OCI-LY7 (cell line): ENCODE measurements at regions of chr6 and their contacts with region 1.

Region 1: GRCh38 chr6:138428944-138429598 is 25.0 kb downstream of the HEBP2 start:
- DNase-seq: peak; percentile 73
- H3K4me3 ChIP-seq: no peak overlapping the region
- H3K27ac ChIP-seq: no peak overlapping the region
- H3K4me1 ChIP-seq: no peaks in the 10 kb centered on the region
- CTCF ChIP-seq: peak; percentile 95

Region 2: DNA sequence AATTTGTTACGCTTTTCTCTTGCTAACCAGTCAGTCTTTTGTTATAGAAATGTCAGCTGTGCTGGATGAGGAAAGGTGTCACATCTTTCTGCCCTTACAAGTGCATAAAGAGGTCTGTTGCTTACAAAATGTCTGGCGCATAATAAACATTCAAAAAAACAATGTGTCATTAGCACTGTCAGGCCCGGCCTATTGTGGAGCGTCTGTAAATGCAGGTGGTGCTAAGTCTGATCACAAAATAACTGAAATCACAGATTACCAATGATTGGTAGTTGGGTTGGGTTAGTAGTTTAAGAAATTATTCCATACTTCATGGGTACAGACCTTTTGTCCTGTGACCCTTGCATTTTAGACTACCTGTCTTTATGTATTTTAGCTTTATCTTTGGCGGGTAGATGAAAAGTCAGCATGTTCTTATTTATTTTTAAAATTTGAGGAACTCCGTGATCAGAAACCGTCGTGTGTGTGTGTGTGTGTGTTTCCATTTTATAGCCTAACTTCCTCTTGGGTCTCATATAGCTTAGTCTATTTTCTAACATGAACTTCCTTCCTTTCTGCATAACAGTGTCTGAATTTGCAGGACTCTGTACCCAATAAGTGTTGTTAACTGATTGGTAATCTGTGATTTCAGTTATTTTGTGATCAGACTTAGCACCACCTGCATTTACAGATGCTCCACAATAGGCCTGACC is 1121.8 kb before region 1 on chr6:
- CTCF ChIA-PET with region 1: no interaction called
- POLR2A ChIA-PET with region 1: no interaction called
- intact Hi-C with region 1: no loop called
- DNase-seq: peak; percentile 10
- H3K4me3 ChIP-seq: no peak overlapping the region
- H3K27ac ChIP-seq: no peak overlapping the region
- H3K4me1 ChIP-seq: peaks cover 8% of the 10 kb centered on the region
- CTCF ChIP-seq: no peak

Region 3: GRCh38 chr6:138107078-138107751 is 321.9 kb before region 1 on chr6 and contains the start of gene PERP:
- CTCF ChIA-PET with region 1: no interaction called
- POLR2A ChIA-PET with region 1: no interaction called
- intact Hi-C with region 1: no loop called
- DNase-seq: no peak
- H3K4me3 ChIP-seq: no peak within 1 kb of the TSS
- H3K27ac ChIP-seq: no peak within 1 kb of the TSS
- H3K4me1 ChIP-seq: no peaks in the 10 kb centered on the region
- CTCF ChIP-seq: no peak
- total RNA-seq, gene PERP: not detected in 2 replicates

Region 4: GRCh38 chr6:138336221-138336620 is 92.8 kb before region 1 on chr6:
- CTCF ChIA-PET with region 1: no interaction called
- POLR2A ChIA-PET with region 1: no interaction called
- intact Hi-C with region 1: no loop called
- DNase-seq: no peak
- H3K4me3 ChIP-seq: no peak overlapping the region
- H3K27ac ChIP-seq: no peak overlapping the region
- H3K4me1 ChIP-seq: no peaks in the 10 kb centered on the region
- CTCF ChIP-seq: no peak

Region 5: DNA sequence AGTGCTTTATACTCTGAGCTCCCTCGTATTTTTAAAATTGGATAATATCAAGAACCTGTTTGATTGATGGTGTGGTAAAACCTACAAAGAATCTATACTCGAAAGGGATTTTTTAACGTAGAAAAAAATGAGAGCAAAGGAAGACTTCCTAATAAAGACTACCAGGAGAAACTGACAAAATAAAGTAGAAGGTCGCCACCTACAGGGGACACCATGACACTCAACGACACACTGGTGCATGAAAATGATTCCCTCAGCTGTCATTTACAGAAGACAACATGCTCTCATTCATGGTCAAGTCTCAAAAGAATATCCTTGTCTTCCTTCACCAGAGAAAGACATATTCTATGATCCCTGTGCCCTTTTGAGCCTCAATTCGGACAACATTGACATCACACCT is 80.3 kb after region 1 on chr6:
- CTCF ChIA-PET with region 1: interaction called, 7 read pairs
- POLR2A ChIA-PET with region 1: interaction called, 3 read pairs
- intact Hi-C with region 1: loop called (anchors 1 kb)
- DNase-seq: peak; percentile 60
- H3K4me3 ChIP-seq: no peak overlapping the region
- H3K27ac ChIP-seq: no peak overlapping the region
- H3K4me1 ChIP-seq: peaks cover 4% of the 10 kb centered on the region
- CTCF ChIP-seq: peak; percentile 84

Region 6: GRCh38 chr6:138517635-138518034 is 88.6 kb after region 1 on chr6:
- CTCF ChIA-PET with region 1: no interaction called
- POLR2A ChIA-PET with region 1: interaction called, 7 read pairs
- intact Hi-C with region 1: loop called (anchors 2 kb)
- DNase-seq: peak; percentile 76
- H3K4me3 ChIP-seq: no peak overlapping the region
- H3K27ac ChIP-seq: no peak overlapping the region
- H3K4me1 ChIP-seq: peaks cover 5% of the 10 kb centered on the region
- CTCF ChIP-seq: peak; percentile 85

Region 7: GRCh38 chr6:138588805-138589434 is 159.8 kb after region 1 on chr6:
- CTCF ChIA-PET with region 1: no interaction called
- POLR2A ChIA-PET with region 1: interaction called, 3 read pairs
- intact Hi-C with region 1: loop called (anchors 2 kb)
- DNase-seq: peak; percentile 68
- H3K4me3 ChIP-seq: no peak overlapping the region
- H3K27ac ChIP-seq: no peak overlapping the region
- H3K4me1 ChIP-seq: peaks cover 16% of the 10 kb centered on the region
- CTCF ChIP-seq: peak; percentile 97

Region 8: DNA sequence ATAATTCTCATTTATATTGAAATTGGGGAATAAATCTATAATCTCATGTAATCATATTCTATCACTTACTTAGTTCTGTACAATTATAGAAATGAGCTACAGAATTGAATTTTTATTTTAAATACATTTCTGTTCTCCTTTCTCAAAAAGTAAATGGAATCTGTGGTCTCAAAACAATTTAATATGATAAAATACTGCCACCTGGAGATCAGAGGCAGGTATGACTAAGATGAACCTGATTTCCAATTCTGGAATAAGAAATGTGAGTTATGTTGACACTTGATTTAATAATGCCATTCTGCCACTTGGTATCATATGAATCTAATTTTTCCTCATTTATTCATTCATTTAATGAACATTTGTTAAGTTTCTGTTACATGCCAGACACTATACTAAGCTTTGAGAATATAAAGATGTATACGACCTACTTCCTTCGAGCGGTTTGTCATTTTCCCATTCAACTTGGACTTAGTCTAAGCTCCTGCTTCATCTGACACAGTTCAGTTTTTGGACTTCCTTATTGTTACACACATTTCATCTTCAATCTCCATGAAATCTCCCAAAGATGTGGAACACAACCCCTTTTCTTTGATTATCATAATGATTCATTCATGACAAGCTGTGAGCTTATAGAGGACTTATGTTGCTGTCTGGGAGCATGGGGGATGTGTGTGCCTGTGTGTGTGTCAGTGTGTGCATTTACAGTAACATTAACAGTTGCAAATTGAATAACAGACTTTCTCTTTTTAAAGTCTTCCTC is 337.0 kb after region 1 on chr6:
- CTCF ChIA-PET with region 1: no interaction called
- POLR2A ChIA-PET with region 1: interaction called, 3 read pairs
- intact Hi-C with region 1: loop called (anchors 5 kb)
- DNase-seq: peak; percentile 55
- H3K4me3 ChIP-seq: no peak overlapping the region
- H3K27ac ChIP-seq: no peak overlapping the region
- H3K4me1 ChIP-seq: no peaks in the 10 kb centered on the region
- CTCF ChIP-seq: peak; percentile 94